ENCODE measurements at regions of chr9 and their contacts with region 1.

Region 1: GRCh38 chr9:87812375-87813118 is 70.1 kb upstream of the SPATA31E1 start:
- DNase-seq: peak in 1 of 6 donors; percentile 31
- ATAC-seq: peak in 3 of 4 donors; percentile 80 to 83 (median 82)
- H3K4me3 ChIP-seq: no peak overlapping the region
- H3K27ac ChIP-seq: no peak overlapping the region
- H3K4me1 ChIP-seq: no peaks in the 10 kb centered on the region
- H3K27me3 ChIP-seq: no peaks in the 10 kb centered on the region
- CTCF ChIP-seq: peak; percentile 66 to 87 (median 86)

Region 2: GRCh38 chr9:87674565-87675299 is 137.8 kb before region 1 on chr9:
- intact Hi-C with region 1: loop called in 1 of 3 experiments (anchors 5 kb)
- DNase-seq: no peak
- ATAC-seq: peak in 1 of 4 donors; percentile 28
- H3K4me3 ChIP-seq: no peak overlapping the region
- H3K27ac ChIP-seq: peak overlapping the region in 1 of 4 donors; percentile 19
- H3K4me1 ChIP-seq: peaks cover 0 to 3% (median 0%) of the 10 kb centered on the region in 3 donors
- H3K27me3 ChIP-seq: no peaks in the 10 kb centered on the region
- CTCF ChIP-seq: no peak

Region 3: GRCh38 chr9:87684627-87685219 is 127.8 kb before region 1 on chr9:
- intact Hi-C with region 1: loop called in 1 of 3 experiments (anchors 5 kb)
- DNase-seq: peak in 5 of 6 donors; percentile 57 to 88 (median 76)
- ATAC-seq: peak; percentile 63 to 76 (median 74)
- H3K4me3 ChIP-seq: no peak overlapping the region
- H3K27ac ChIP-seq: peak overlapping the region in 1 of 4 donors; percentile 22
- H3K4me1 ChIP-seq: peaks cover 6 to 12% (median 8%) of the 10 kb centered on the region in 3 donors
- H3K27me3 ChIP-seq: no peaks in the 10 kb centered on the region
- CTCF ChIP-seq: peak; percentile 63 to 81 (median 76)

Region 4: GRCh38 chr9:88722753-88723152 is 910.2 kb after region 1 on chr9:
- intact Hi-C with region 1: no loop called
- DNase-seq: no peak
- ATAC-seq: peak in 2 of 4 donors; percentile 34 to 38
- H3K4me3 ChIP-seq: no peak overlapping the region
- H3K27ac ChIP-seq: no peak overlapping the region
- H3K4me1 ChIP-seq: no peaks in the 10 kb centered on the region
- H3K27me3 ChIP-seq: no peaks in the 10 kb centered on the region
- CTCF ChIP-seq: no peak